ENCODE measurements at regions of chr1 and their contacts with region 1.

Region 1: DNA sequence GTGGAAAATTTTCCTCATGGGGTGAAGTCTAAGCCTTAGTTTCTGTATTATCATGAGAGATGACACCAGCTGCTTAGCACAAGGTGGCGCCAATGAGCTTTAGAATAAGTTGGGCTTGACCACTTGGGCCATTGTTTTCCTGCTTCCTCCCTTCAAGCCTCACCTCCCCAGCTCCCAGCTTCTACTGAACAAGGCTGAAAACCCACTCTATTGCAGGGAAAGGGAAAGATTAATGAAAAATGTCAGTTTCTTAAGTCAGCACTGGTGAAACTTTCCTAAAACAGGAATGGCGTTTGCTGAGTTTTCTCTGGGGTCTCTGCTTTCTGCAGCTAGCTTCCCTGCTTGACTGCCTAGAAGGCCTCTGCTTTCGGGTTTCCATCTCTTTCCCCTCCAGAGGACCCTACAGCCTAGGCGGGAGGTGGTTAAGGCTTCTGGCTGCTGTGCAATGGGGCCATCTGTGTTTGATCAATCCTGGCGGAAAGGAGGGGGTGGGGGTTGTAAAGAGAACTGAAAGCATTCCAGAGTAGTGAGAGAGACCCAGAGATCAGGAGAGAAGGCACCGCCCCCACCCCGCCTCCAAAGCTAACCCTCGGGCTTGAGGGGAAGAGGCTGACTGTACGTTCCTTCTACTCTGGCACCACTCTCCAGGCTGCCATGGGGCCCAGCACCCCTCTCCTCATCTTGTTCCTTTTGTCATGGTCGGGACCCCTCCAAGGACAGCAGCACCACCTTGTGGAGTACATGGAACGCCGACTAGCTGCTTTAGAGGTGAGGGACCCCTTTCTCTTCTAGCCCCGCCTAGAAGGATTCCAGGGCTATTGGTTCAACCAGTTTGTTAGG is at the start of gene OLFML3:
- DNase-seq: peak; percentile 92
- total RNA-seq, gene OLFML3: 43.6 to 109 TPM

Region 2: GRCh38 chr1:113811888-113812660 is 167.0 kb before region 1 on chr1 and contains the start of gene RSBN1:
- intact Hi-C with region 1: loop called in 1 of 2 experiments (anchors 10 kb)
- DNase-seq: peak; percentile 100
- total RNA-seq, gene RSBN1: 14.4 to 16.2 TPM

Region 3: DNA sequence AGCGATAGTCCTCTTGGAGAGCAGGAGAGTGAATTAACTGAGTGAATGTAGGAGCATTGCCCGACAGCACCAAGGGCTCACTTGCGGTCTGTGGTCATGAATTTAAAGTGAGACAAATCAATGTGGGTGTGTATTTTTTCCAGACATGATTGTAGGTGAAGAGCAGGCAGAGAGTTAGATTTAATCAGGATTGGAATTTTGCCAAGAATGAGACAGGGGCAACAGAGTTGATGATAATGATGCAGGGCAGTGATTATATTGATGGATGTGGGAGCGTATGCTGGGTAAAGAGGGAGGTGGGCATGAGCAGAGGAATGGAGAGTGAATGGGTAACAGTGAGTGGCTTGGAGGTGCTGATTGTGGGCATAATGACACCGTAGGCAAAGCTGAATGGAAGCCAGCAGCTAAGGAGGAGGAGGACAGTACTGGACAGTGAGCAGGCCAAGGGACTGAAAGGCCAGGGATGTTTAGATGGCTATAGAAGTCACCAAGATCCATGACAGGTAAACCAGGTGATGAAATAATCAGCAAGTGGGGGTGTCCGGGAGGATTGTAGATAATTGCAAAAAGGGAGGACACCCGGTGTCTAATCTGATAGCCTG is 194.7 kb after region 1 on chr1:
- intact Hi-C with region 1: loop called in 1 of 2 experiments (anchors 5 kb)
- DNase-seq: no peak

Region 4: GRCh38 chr1:114282751-114283403 is 303.8 kb after region 1 on chr1:
- intact Hi-C with region 1: loop called (anchors 5 kb)
- DNase-seq: peak; percentile 96

Measured in posterior vena cava (tissue), 2 donors.